ENCODE measurements at regions of chr21 and their contacts with region 1.

Region 1: DNA sequence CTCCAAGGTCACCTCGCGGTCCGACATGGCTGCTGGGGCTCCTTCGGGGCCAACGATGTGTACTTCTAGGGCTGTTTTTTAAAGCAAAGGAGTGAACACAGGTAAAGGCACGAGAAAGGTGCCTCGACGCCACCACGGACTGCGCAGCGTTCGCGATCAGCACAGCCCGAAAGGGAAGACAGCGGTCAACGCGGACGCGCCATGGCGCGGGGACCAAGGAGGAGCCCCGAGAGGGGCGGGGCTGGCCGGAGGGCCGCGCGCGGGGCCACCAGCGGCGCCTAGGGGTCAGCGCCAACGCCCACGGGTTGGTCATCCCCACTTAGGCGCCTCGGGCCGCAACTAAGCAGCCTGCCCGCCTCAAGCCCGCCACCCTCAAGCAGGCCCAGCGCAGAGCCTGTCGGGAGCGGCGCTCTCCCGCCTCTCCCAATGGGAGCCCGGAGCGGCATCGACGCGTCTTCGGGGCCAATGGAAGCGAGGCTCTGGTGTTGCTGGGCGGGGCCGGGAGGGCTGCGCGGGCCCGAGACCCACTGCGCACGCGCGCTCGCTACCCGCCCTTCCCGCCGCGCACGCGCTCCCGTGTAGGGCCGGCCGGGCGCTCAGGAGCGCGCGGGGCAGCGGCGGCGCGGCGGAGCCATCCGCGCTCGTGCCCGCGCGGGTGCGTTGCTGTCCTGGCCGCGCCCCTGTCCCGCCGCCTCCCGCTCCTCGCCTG is at the start of gene DIP2A:
- DNase-seq: peak; percentile 95 to 97 (median 96)
- H3K4me3 ChIP-seq: peak within 1 kb of the TSS; percentile 89 to 100
- H3K4me3 Mint-ChIP-seq: peak within 1 kb of the TSS; percentile 88 to 93 (median 92)
- H3K27ac ChIP-seq: peak within 1 kb of the TSS; percentile 74
- H3K27ac Mint-ChIP-seq: peak within 1 kb of the TSS; percentile 90 to 95 (median 94)
- H3K4me1 ChIP-seq: peaks cover 42% of the 10 kb centered on the region
- H3K4me1 Mint-ChIP-seq: peaks cover 28 to 60% (median 44%) of the 10 kb centered on the region in 4 donors
- H3K27me3 ChIP-seq: no peaks in the 10 kb centered on the region
- H3K27me3 Mint-ChIP-seq: no peaks in the 10 kb centered on the region
- total RNA-seq, gene DIP2A: 94.6 to 95.9 TPM

Region 2: DNA sequence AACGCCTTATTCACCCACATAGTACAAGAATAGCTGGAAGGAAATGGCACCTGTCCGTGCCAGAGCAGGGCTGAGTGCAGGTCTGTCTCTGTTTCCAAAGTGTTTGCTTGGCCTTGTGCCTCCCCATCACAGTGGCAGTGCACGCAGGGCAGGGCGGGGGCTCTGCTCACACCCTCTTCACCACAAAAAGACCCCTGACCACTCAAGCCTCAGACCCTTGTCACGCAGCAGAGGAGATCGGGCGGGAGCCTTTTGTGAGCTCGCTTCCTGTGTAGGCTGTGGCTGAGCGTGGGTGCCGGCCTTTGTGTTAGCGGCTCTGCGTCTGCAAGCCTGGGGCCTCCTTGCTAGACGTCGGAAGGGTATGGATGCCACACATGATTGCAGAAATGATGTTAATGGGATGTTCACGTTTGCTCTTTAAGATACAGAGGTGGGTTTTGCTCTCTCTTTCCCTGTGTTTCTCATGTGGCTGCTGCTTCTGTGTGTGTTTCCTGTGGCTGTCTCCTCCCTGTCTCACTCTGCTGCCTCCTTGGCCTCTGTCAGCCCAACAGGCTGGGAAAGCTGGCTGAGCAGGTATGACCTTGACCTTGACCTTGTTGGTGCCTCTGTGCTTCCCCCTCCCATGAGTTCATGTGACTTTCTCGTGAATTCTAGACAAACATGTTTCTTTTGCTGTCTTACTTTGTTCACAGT is 101.0 kb after region 1 on chr21:
- CTCF ChIA-PET with region 1: no interaction called
- POLR2A ChIA-PET with region 1: interaction called, 26 read pairs
- intact Hi-C with region 1: no loop called
- DNase-seq: peak; percentile 61 to 83 (median 66)
- H3K4me3 ChIP-seq: peak overlapping the region; percentile 45 to 46
- H3K4me3 Mint-ChIP-seq: peak overlapping the region; percentile 67 to 90 (median 78)
- H3K27ac ChIP-seq: peak overlapping the region; percentile 66
- H3K27ac Mint-ChIP-seq: peak overlapping the region; percentile 87 to 99 (median 97)
- H3K4me1 ChIP-seq: peaks cover 50% of the 10 kb centered on the region
- H3K4me1 Mint-ChIP-seq: peaks cover 29 to 82% (median 41%) of the 10 kb centered on the region in 4 donors
- H3K27me3 ChIP-seq: no peaks in the 10 kb centered on the region
- H3K27me3 Mint-ChIP-seq: no peaks in the 10 kb centered on the region

Measured in CD4-positive, alpha-beta memory T cell (primary cell).